GM10248 (cell line): ENCODE measurements at regions of chr4 and their contacts with region 1.

Region 1: GRCh38 chr4:111960241-111960667 is 185.0 kb upstream of the FAM241A start:
- DNase-seq: peak; percentile 32
- CTCF ChIP-seq: no peak

Region 2: DNA sequence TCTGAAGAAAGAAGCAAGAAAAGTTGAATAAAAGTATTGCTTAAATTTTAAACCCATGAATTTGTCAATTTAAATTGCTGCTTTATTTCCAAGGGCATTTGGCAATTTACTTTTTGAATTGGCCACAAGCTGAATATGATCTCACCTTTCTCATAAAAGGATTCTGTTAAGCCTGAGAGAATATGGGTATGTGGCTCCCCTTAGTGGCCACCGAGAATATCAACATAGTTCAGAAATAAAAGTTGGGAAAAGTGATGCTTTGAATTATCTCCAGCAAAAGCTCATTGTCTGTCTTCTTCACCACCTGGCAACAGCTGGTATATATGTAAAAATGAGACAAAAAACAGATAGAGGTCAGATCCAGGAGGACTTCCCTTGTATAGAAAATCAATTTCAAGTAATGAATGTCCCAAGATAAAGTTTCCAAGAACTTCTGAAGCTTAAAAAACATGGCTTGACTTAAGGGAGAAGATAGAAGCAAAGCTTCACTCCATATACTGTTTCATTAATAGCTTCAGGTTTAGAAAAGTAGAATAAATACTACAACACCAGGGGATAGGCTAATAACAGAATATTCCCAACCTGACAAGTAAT is 105.7 kb before region 1 on chr4:
- CTCF ChIA-PET with region 1: no interaction called
- POLR2A ChIA-PET with region 1: no interaction called
- DNase-seq: peak; percentile 7
- CTCF ChIP-seq: peak; percentile 63

Region 3: GRCh38 chr4:111943795-111944203 is 16.5 kb before region 1 on chr4:
- CTCF ChIA-PET with region 1: interaction called, 15 read pairs
- POLR2A ChIA-PET with region 1: no interaction called
- DNase-seq: peak; percentile 57
- CTCF ChIP-seq: peak; percentile 57